Naive thymus-derived CD4-positive, alpha-beta T cell (primary cell): ENCODE measurements at regions of chr14 and their contacts with region 1.

Region 1: GRCh38 chr14:21014761-21015190 is 10.1 kb downstream of the NDRG2 start:
- DNase-seq: peak; percentile 56 to 82 (median 76)
- ATAC-seq: peak; percentile 88
- H3K4me3 ChIP-seq: no peak overlapping the region
- H3K4me3 Mint-ChIP-seq: no peak overlapping the region
- H3K27ac ChIP-seq: no peak overlapping the region
- H3K27ac Mint-ChIP-seq: peak overlapping the region in 1 of 9 donors; percentile 17
- H3K4me1 ChIP-seq: no peaks in the 10 kb centered on the region
- H3K4me1 Mint-ChIP-seq: peaks cover 0 to 5% (median 0%) of the 10 kb centered on the region in 7 donors
- H3K27me3 ChIP-seq: no peaks in the 10 kb centered on the region
- H3K27me3 Mint-ChIP-seq: peaks cover 12 to 29% (median 21%) of the 10 kb centered on the region in 5 donors

Region 2: DNA sequence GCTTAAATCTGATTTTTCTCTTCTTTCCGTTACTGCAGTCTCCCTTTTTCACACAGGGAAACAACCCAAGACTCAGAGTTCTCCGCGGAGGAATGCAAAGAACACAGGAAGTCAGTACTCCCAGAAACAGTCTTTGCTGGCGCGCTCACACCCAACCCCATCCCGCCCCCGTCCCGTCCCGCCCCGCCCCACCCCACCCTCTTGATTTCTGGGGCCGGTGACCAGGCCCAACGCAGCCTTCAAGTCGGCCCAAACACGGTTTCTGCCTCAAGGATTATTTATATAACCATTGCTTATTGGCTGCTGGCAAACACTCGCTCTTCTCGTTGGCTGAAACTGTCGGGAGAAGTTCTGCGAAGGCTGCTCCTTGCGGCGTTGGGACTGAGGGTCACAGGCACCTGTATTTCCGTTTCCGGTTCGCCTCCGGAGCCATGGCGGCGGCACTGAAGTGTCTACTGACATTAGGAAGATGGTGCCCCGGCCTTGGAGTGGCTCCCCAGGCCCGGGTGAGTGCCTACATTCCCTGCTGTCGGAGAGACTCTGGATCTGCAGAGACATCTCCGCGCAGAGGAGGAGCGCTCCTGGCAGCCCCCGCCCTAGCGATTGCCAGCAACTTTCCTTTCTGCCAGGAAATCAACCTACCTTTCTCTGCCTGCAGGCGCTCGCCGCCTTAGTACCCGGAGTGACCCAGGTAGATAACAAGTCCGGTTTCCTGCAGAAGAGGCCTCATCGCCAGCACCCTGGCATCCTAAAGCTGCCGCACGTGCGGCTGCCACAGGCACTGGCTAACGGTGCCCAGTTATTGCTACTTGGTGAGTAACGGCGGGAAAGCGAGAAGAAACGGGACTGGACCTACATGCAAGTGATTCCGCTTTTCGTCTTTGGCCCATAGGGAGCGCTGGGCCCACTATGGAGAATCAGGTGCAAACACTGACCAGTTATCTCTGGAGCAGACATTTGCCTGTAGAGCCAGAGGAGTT is 24.9 kb before region 1 on chr14 and contains the start of gene METTL17:
- CTCF ChIA-PET with region 1: interaction called, 10 read pairs
- POLR2A ChIA-PET with region 1: no interaction called
- intact Hi-C with region 1: no loop called
- DNase-seq: peak; percentile 64 to 88 (median 81)
- ATAC-seq: peak; percentile 95
- H3K4me3 ChIP-seq: peak within 1 kb of the TSS; percentile 86
- H3K4me3 Mint-ChIP-seq: peak within 1 kb of the TSS; percentile 86 to 97 (median 92)
- H3K27ac ChIP-seq: peak within 1 kb of the TSS; percentile 77
- H3K27ac Mint-ChIP-seq: peak within 1 kb of the TSS; percentile 86 to 98 (median 95)
- H3K4me1 ChIP-seq: peaks cover 12 to 16% of the 10 kb centered on the region in 2 donors
- H3K4me1 Mint-ChIP-seq: peaks cover 0 to 46% (median 37%) of the 10 kb centered on the region in 7 donors
- H3K27me3 ChIP-seq: no peaks in the 10 kb centered on the region
- H3K27me3 Mint-ChIP-seq: no peaks in the 10 kb centered on the region
- total RNA-seq, gene METTL17: 75.4 to 129 (median 96.7) TPM

Region 3: GRCh38 chr14:21024585-21025370 is 10.0 kb after region 1 on chr14 and contains the start of gene NDRG2:
- CTCF ChIA-PET with region 1: interaction called, 99 read pairs
- POLR2A ChIA-PET with region 1: interaction called, 5 read pairs
- intact Hi-C with region 1: loop called in 1 of 2 experiments (anchors 1 kb)
- DNase-seq: peak; percentile 50 to 78 (median 67)
- ATAC-seq: peak; percentile 93
- H3K4me3 ChIP-seq: peak within 1 kb of the TSS; percentile 70
- H3K4me3 Mint-ChIP-seq: peak within 1 kb of the TSS; percentile 84 to 97 (median 92)
- H3K27ac ChIP-seq: peak within 1 kb of the TSS; percentile 70
- H3K27ac Mint-ChIP-seq: peak within 1 kb of the TSS in 8 of 9 donors; percentile 66 to 92 (median 80)
- H3K4me1 ChIP-seq: peaks cover 7 to 13% of the 10 kb centered on the region in 2 donors
- H3K4me1 Mint-ChIP-seq: peaks cover 7 to 28% (median 23%) of the 10 kb centered on the region in 7 donors
- H3K27me3 ChIP-seq: no peaks in the 10 kb centered on the region
- H3K27me3 Mint-ChIP-seq: peaks cover 0 to 47% (median 0%) of the 10 kb centered on the region in 5 donors
- total RNA-seq, gene NDRG2: 5.9 to 39.9 (median 35.2) TPM

Region 4: DNA sequence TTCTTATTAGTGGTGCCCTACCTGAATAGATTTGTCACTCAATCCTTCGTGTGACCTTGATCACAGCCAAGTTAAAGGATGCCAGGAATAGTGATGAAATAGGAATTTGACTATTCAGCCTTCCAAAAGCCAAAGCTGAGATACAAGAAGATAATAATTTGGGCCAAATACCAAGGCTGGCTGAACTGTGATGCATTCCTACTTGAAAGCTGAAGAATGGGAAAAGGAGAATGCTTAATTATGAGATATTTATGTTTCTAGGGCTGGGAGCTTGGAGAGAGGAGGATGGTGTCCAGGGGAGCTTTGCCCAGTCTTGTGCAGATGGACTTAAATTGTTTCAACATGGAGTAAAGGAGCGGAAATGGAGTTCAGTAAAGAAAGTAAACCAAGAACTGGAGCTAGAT is 32.6 kb after region 1 on chr14:
- CTCF ChIA-PET with region 1: interaction called, 178 read pairs
- POLR2A ChIA-PET with region 1: interaction called, 3 read pairs
- intact Hi-C with region 1: no loop called
- DNase-seq: no peak
- ATAC-seq: no peak
- H3K4me3 ChIP-seq: no peak overlapping the region
- H3K4me3 Mint-ChIP-seq: no peak overlapping the region
- H3K27ac ChIP-seq: no peak overlapping the region
- H3K27ac Mint-ChIP-seq: no peak overlapping the region
- H3K4me1 ChIP-seq: no peaks in the 10 kb centered on the region
- H3K4me1 Mint-ChIP-seq: peaks cover 2 to 9% (median 8%) of the 10 kb centered on the region in 7 donors
- H3K27me3 ChIP-seq: peaks cover 0 to 4% of the 10 kb centered on the region in 2 donors
- H3K27me3 Mint-ChIP-seq: peaks cover 7 to 42% (median 14%) of the 10 kb centered on the region in 5 donors

Region 5: GRCh38 chr14:21092273-21093011 is 77.7 kb after region 1 on chr14:
- CTCF ChIA-PET with region 1: interaction called, 132 read pairs
- POLR2A ChIA-PET with region 1: interaction called, 6 read pairs
- intact Hi-C with region 1: loop called (anchors 1 kb)
- DNase-seq: peak; percentile 82 to 98 (median 93)
- ATAC-seq: peak; percentile 90
- H3K4me3 ChIP-seq: no peak overlapping the region
- H3K4me3 Mint-ChIP-seq: peak overlapping the region in 1 of 10 donors; percentile 6
- H3K27ac ChIP-seq: no peak overlapping the region
- H3K27ac Mint-ChIP-seq: peak overlapping the region in 8 of 9 donors; percentile 17 to 88 (median 78)
- H3K4me1 ChIP-seq: peaks cover 6 to 14% of the 10 kb centered on the region in 2 donors
- H3K4me1 Mint-ChIP-seq: peaks cover 15 to 37% (median 27%) of the 10 kb centered on the region in 7 donors
- H3K27me3 ChIP-seq: no peaks in the 10 kb centered on the region
- H3K27me3 Mint-ChIP-seq: peaks cover 0 to 17% (median 0%) of the 10 kb centered on the region in 5 donors

Region 6: DNA sequence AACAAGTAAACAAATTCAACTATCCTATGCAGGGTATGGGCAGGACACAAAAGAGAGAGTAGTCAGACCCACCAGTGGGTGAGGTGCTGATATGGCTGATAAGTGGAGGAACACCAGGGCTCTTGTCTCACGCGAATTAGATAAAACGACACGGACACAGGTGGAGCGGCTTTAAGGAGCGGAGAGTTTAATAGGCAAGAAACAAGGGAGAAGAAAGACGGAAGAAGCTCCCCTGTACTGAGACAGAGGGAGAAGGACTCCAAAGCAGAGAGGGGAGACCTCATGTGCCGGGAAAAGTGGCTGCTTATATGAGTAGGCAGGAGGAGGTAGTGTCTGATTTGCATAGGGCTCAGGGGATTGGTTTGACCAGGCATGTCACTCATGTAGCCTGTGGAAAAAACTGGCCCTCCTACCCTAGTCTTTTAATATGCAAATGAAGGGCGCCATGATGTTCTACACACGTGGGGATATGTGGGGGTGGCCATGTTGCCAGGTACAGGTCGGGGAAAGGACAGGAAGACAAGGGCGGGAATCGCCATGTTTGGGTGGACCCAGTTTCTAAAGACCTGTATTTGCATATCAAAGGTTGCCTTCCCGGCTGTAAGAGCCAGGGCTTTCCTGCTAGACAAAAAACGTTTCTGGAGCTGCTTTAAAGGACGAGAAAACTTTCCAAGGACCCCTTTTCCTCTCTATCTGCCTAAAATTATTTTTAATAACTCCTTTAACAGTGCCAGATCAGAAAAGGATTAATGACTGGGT is 293.9 kb after region 1 on chr14:
- CTCF ChIA-PET with region 1: no interaction called
- POLR2A ChIA-PET with region 1: no interaction called
- intact Hi-C with region 1: no loop called
- DNase-seq: peak; percentile 20 to 82 (median 78)
- ATAC-seq: peak; percentile 91
- H3K4me3 ChIP-seq: peak overlapping the region; percentile 63
- H3K4me3 Mint-ChIP-seq: peak overlapping the region; percentile 68 to 88 (median 83)
- H3K27ac ChIP-seq: peak overlapping the region; percentile 64
- H3K27ac Mint-ChIP-seq: peak overlapping the region; percentile 63 to 95 (median 82)
- H3K4me1 ChIP-seq: peaks cover 5 to 10% of the 10 kb centered on the region in 2 donors
- H3K4me1 Mint-ChIP-seq: peaks cover 7 to 24% (median 18%) of the 10 kb centered on the region in 7 donors
- H3K27me3 ChIP-seq: no peaks in the 10 kb centered on the region
- H3K27me3 Mint-ChIP-seq: peaks cover 0 to 17% (median 0%) of the 10 kb centered on the region in 5 donors